Aorta (tissue), 5 donors: ENCODE measurements at regions of chr13 and their contacts with region 1.

Region 1: GRCh38 chr13:51583875-51584730 is at the start of gene WDFY2:
- DNase-seq: peak; percentile 100
- ATAC-seq: peak; percentile 98
- H3K4me3 ChIP-seq: peak within 1 kb of the TSS; percentile 38 to 95
- H3K27ac ChIP-seq: peak within 1 kb of the TSS; percentile 49 to 76
- H3K4me1 ChIP-seq: peaks cover 0 to 5% of the 10 kb centered on the region in 2 donors
- H3K27me3 ChIP-seq: no peaks in the 10 kb centered on the region
- total RNA-seq, gene WDFY2: 15.3 to 24.4 TPM

Region 2: DNA sequence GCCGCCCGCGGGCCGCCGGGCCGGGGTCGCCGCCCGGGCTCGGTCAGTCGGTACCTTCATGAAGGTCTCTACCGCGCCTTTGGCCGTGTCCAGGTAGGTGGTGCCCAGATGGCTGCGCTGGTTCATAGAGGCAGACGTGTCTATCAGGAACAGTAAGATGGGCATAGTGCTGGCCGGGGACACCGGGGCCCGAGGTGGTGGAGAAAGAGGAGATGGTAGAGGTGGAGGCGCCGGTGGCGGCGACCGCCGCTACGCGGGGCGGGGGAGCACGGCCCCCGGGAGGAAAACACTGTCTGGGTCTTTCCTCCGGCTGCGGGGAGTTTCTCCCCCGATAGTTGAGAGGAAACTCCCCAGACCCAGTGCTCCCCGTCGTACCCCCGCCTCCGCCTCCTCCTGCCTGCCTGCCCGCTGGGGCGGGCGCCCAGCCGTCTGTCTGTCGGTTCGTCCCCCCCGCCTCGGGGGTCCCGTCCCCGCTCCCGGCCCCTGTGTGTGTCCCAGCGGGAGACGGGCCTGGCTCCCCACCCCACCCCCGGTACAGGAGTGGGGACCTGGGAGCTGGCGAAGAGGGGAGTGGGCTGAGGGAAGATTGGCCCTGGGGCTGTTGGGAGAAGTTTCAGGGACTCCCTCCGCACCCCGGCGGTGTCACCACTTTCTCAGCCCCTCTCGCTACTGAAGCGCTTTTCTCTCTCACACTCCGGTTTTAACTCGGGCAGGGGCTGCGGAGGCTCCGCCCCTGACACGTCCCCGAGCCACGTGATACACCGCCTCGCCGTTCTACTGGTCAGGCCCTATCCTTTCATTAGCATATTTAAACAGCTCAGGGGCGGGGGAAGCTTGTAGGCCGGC is 131.5 kb before region 1 on chr13 and contains the start of gene INTS6:
- intact Hi-C with region 1: loop called (anchors 1 to 5 kb)
- DNase-seq: peak; percentile 99
- ATAC-seq: peak; percentile 97
- H3K4me3 ChIP-seq: peak within 1 kb of the TSS; percentile 79 to 100
- H3K27ac ChIP-seq: peak within 1 kb of the TSS; percentile 88 to 100
- H3K4me1 ChIP-seq: peaks cover 0 to 3% of the 10 kb centered on the region in 2 donors
- H3K27me3 ChIP-seq: peaks cover 0 to 2% of the 10 kb centered on the region in 2 donors
- total RNA-seq, gene INTS6: 38.1 to 51.6 TPM

Region 3: GRCh38 chr13:51502153-51502651 is 81.9 kb before region 1 on chr13:
- intact Hi-C with region 1: no loop called
- DNase-seq: no peak
- ATAC-seq: no peak
- H3K4me3 ChIP-seq: no peak overlapping the region
- H3K27ac ChIP-seq: no peak overlapping the region
- H3K4me1 ChIP-seq: no peaks in the 10 kb centered on the region
- H3K27me3 ChIP-seq: no peaks in the 10 kb centered on the region

Region 4: GRCh38 chr13:51645154-51645650 is 61.1 kb after region 1 on chr13:
- intact Hi-C with region 1: loop called in 1 of 2 experiments (anchors 10 kb)
- DNase-seq: no peak
- ATAC-seq: peak; percentile 78
- H3K4me3 ChIP-seq: no peak overlapping the region
- H3K27ac ChIP-seq: no peak overlapping the region
- H3K4me1 ChIP-seq: peaks cover 3 to 18% of the 10 kb centered on the region in 2 donors
- H3K27me3 ChIP-seq: no peaks in the 10 kb centered on the region

Region 5: GRCh38 chr13:51721496-51721895 is 137.4 kb after region 1 on chr13:
- intact Hi-C with region 1: loop called in 1 of 2 experiments (anchors 5 kb)
- DNase-seq: peak in 1 of 2 donors; percentile 44
- ATAC-seq: peak; percentile 82
- H3K4me3 ChIP-seq: no peak overlapping the region
- H3K27ac ChIP-seq: peak overlapping the region; percentile 47 to 76
- H3K4me1 ChIP-seq: peaks cover 5 to 7% of the 10 kb centered on the region in 2 donors
- H3K27me3 ChIP-seq: no peaks in the 10 kb centered on the region